ENCODE measurements at regions of chr4 and their contacts with region 1.

Region 1: DNA sequence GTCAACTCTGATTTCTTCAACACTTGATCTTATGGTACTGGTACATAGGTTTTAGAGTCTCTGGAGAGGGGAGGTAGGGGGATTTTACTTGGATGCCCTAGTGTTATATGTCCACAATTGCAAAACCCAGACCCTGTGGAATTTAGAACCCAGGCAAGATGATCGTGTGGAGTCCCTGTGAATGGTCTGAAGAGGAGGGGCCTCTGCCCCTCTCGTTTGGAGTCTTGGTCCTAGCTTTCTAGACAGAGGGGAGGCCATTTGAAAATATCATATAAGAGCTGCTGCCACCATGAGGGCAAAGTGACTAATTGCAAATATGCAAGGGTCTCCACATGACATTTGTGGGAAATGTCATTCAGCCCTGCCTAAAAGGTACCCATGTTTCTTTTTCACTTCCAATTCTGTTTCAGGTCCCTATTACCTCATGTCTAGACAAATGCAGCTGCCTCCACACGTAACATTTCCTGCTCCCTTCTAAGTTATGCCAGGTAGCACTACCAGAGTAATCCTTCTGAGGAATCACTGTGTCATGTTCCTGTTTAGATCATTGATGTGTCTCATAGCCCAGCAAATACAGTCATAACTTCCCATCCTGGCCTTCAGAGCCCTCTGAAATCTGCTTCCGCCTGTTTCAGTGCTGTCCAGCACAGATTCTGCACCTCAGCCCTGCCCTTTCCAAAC is 126.8 kb downstream of the KLHL8 start:
- DNase-seq: peak; percentile 40 to 55
- H3K4me3 ChIP-seq: no peak overlapping the region
- H3K4me3 Mint-ChIP-seq: no peak overlapping the region
- H3K27ac Mint-ChIP-seq: peak overlapping the region; percentile 67
- H3K4me1 ChIP-seq: peaks cover 19% of the 10 kb centered on the region
- H3K4me1 Mint-ChIP-seq: peaks cover 31% of the 10 kb centered on the region
- H3K27me3 ChIP-seq: no peaks in the 10 kb centered on the region
- H3K27me3 Mint-ChIP-seq: no peaks in the 10 kb centered on the region
- CTCF ChIP-seq: peak; percentile 31 to 56

Region 2: DNA sequence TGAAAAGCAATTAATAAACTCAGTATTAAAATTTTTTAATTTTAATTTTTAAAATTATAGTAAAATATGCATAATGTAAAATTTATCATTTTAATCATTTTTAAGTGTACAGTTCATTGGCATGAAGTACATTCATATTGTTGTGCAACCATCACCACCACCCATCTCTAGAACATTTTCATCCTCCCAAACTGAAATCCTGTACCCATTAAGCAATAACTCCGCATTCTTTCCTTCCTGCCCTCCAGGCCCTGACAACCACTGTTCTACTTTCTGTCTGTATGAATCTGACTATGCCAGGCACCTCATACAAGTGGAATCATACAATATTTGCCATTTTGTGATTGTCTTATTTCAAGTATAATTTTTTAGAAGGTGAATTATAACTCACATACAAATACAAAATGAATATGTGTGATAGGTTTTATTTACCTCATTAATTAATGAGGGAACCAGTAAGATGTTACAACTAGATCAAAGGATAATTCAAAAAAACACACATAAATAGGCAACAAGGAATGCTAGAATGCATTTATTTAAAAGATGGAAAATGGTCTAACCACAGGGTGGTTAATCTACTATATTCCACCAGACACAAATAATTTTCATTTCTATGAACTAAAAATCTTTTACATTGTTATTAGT is 171.9 kb before region 1 on chr4:
- CTCF ChIA-PET with region 1: interaction called, 33 read pairs
- POLR2A ChIA-PET with region 1: no interaction called
- intact Hi-C with region 1: loop called (anchors 1 kb)
- DNase-seq: no peak
- H3K4me3 ChIP-seq: no peak overlapping the region
- H3K4me3 Mint-ChIP-seq: no peak overlapping the region
- H3K27ac Mint-ChIP-seq: no peak overlapping the region
- H3K4me1 ChIP-seq: peaks cover 18% of the 10 kb centered on the region
- H3K4me1 Mint-ChIP-seq: peaks cover 15% of the 10 kb centered on the region
- H3K27me3 ChIP-seq: no peaks in the 10 kb centered on the region
- H3K27me3 Mint-ChIP-seq: no peaks in the 10 kb centered on the region
- CTCF ChIP-seq: no peak

Region 3: DNA sequence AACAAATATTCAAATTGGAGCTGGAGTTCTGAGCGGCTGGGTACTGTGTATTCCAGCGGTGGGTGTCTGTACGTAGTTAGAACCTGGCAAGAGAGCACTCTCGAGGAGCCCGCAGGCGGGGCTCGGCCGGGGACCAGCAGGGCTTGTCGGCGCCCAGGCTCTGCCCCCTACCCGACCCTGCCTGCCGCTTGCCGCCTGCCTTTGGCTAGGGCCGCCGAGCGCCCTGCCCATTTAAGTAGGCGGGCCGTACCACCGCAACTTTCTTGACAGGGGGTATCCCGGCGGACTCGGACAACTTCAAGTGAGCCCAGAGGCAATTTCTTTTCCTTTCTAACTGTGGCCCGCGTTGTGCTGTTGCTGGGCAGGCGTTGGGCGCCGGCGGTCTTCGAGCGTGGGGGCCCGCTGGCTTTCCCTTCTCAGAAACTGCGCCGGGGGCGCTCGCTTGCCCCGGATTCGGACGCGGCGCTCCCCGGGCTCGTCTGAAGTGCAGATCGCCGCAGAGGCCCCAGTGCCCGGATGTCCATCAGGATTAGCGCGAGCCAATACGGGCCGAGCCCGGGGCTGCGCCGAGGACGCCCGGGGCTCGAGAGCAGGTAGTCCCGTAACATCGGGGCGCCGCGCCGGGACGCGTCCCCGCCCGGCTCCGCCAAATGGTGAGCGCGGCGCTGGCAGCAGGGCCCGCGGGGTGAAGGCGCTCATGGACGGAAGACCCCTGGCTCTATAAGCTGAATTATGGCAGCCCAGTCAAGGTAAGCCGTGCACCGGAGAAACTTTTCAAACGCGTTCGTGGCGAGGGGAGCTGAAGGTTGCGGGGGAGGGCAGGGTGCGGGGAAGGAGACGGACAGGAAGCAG is 86.7 kb before region 1 on chr4:
- CTCF ChIA-PET with region 1: interaction called, 10 read pairs
- POLR2A ChIA-PET with region 1: interaction called, 3 read pairs
- intact Hi-C with region 1: loop called (anchors 1 kb)
- DNase-seq: peak; percentile 95
- H3K4me3 ChIP-seq: peak overlapping the region; percentile 94
- H3K4me3 Mint-ChIP-seq: peak overlapping the region; percentile 97
- H3K27ac Mint-ChIP-seq: peak overlapping the region; percentile 93
- H3K4me1 ChIP-seq: peaks cover 41% of the 10 kb centered on the region
- H3K4me1 Mint-ChIP-seq: peaks cover 8% of the 10 kb centered on the region
- H3K27me3 ChIP-seq: no peaks in the 10 kb centered on the region
- H3K27me3 Mint-ChIP-seq: no peaks in the 10 kb centered on the region
- CTCF ChIP-seq: peak in 1 of 2 experiments; percentile 30

Region 4: DNA sequence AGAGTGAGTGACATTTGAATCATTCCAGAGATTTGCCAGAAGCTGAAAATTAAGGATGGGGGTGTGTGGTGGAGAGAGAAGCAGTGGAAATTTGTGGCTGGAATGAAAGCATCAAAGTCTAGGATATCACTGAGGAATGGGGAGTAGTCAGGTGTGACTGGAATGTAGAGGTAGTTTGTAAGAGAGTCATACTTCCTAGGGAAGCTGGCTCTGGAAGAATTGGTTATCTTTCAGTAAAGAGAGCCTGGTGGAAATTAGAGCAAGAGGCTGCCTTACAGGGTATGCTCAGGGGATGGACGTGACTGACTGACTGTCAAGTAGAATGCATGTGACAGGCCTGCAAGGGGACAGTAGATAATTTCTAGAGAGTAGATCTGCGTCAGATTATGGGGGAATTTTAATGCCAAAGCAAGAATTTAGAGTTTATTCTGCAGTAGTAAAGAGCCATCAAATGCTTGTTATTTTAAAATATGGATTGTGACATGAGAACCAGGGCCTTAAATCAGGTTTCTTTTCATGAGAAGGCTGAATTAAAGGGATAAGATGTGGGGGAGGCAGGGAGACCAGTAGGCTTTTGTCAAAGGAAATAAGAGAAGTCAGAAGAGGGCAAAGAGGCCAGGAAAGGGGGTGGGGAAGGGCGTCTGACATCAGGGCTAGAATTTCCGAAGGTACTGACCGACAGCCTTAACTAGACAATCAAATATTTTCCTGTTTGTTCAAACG is 48.9 kb before region 1 on chr4:
- CTCF ChIA-PET with region 1: no interaction called
- POLR2A ChIA-PET with region 1: no interaction called
- intact Hi-C with region 1: loop called (anchors 2 kb)
- DNase-seq: no peak
- H3K4me3 ChIP-seq: no peak overlapping the region
- H3K4me3 Mint-ChIP-seq: no peak overlapping the region
- H3K27ac Mint-ChIP-seq: no peak overlapping the region
- H3K4me1 ChIP-seq: peaks cover 18% of the 10 kb centered on the region
- H3K4me1 Mint-ChIP-seq: no peaks in the 10 kb centered on the region
- H3K27me3 ChIP-seq: no peaks in the 10 kb centered on the region
- H3K27me3 Mint-ChIP-seq: no peaks in the 10 kb centered on the region
- CTCF ChIP-seq: no peak